ENCODE measurements at regions of chr11 and their contacts with region 1.

Region 1: DNA sequence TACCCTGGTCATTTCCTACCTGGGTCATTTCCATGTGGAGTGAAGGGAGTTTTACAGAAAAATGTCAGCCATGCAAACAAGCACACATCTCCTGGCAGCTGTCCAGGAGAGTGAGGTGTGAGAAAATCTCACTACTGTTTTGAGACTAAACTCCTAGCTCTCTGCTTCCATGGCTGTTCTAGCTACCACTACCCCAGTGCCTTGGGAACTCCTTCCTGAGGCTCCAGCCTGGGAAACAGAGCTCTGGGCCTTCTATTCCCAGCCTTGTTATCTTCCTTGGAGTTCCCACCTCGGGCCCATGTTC is 2.8 kb upstream of the TMPRSS13 start:
- DNase-seq: peak; percentile 78
- ATAC-seq: peak; percentile 80
- H3K4me3 ChIP-seq: no peak overlapping the region
- H3K27ac ChIP-seq: no peak overlapping the region; the same call in 1 of the 2 replicates
- H3K4me1 ChIP-seq: peaks cover 40% of the 10 kb centered on the region
- H3K27me3 ChIP-seq: no peaks in the 10 kb centered on the region
- CTCF ChIP-seq: no peak
- EP300 ChIP-seq: peak in 1 of 2 experiments; percentile 57; a peak in 1 of 4 replicates
- POLR2A ChIP-seq: no peak
- RAD21 ChIP-seq: no peak

Region 2: DNA sequence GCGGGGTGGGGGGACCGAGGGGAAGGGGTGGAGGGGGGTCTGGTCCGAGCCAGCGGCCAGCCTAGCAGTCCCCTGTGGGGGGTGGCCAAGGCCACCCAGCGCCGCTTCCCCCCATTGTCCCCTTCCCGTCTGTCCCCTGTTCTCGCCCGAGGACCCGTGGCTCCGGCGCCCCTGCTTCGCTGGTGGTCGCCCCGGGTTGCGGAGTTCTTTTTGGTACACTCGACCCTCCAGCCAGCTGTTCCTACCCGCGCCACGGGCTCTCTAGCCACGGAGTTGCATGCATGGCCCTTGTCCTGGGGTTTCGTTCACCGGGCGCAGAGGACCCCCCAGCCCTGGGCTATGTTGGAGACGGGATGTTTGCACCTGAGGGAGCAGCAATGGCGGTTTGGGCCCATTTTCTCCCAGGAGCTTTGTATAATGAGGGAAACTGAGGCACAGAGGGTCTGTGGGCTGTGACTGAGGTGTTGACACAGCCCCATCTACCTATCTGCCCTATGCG is 699.1 kb before region 1 on chr11:
- CTCF ChIA-PET with region 1: no interaction called
- POLR2A ChIA-PET with region 1: no interaction called
- RAD21 ChIA-PET with region 1: no interaction called
- SMC1A ChIA-PET with region 1: no interaction called
- in situ Hi-C with region 1: no loop called
- intact Hi-C with region 1: no loop called
- DNase-seq: no peak
- ATAC-seq: peak; percentile 27
- H3K4me3 ChIP-seq: peak overlapping the region; percentile 89
- H3K27ac ChIP-seq: peak overlapping the region; percentile 64
- H3K4me1 ChIP-seq: peaks cover 9% of the 10 kb centered on the region
- H3K27me3 ChIP-seq: no peaks in the 10 kb centered on the region
- CTCF ChIP-seq: no peak
- EP300 ChIP-seq: no peak
- POLR2A ChIP-seq: no peak
- RAD21 ChIP-seq: no peak

Region 3: GRCh38 chr11:117885777-117886176 is 46.2 kb before region 1 on chr11:
- CTCF ChIA-PET with region 1: no interaction called
- POLR2A ChIA-PET with region 1: interaction called, 13 read pairs
- RAD21 ChIA-PET with region 1: no interaction called
- SMC1A ChIA-PET with region 1: no interaction called
- in situ Hi-C with region 1: no loop called
- intact Hi-C with region 1: no loop called
- DNase-seq: no peak
- ATAC-seq: no peak
- H3K4me3 ChIP-seq: no peak overlapping the region
- H3K27ac ChIP-seq: no peak overlapping the region
- H3K4me1 ChIP-seq: no peaks in the 10 kb centered on the region
- H3K27me3 ChIP-seq: peaks cover 1 to 3% of the 10 kb centered on the region in 2 experiments; a peak in 3 of 4 replicates
- CTCF ChIP-seq: no peak
- EP300 ChIP-seq: no peak
- POLR2A ChIP-seq: no peak
- RAD21 ChIP-seq: no peak

Region 4: GRCh38 chr11:117907251-117907981 is 24.6 kb before region 1 on chr11:
- CTCF ChIA-PET with region 1: interaction called, 3 read pairs
- POLR2A ChIA-PET with region 1: interaction called, 7 read pairs
- RAD21 ChIA-PET with region 1: interaction called, 3 read pairs
- SMC1A ChIA-PET with region 1: interaction called, 21 read pairs
- in situ Hi-C with region 1: no loop called
- intact Hi-C with region 1: no loop called
- DNase-seq: peak; percentile 54
- ATAC-seq: peak; percentile 93
- H3K4me3 ChIP-seq: no peak overlapping the region
- H3K27ac ChIP-seq: no peak overlapping the region
- H3K4me1 ChIP-seq: peaks cover 5% of the 10 kb centered on the region; the same call in 1 of the 2 replicates
- H3K27me3 ChIP-seq: no peaks in the 10 kb centered on the region; a peak in 1 of 4 replicates
- CTCF ChIP-seq: no peak
- EP300 ChIP-seq: no peak
- POLR2A ChIP-seq: no peak
- RAD21 ChIP-seq: no peak

Measured in GM12878 (cell line).